Natural killer cell (primary cell): ENCODE measurements at regions of chr6 and their contacts with region 1.

Region 1: GRCh38 chr6:31079656-31080261 is 32.6 kb downstream of the C6orf15 start:
- DNase-seq: peak; percentile 39 to 83
- ATAC-seq: peak; percentile 83 to 88 (median 86)
- H3K4me3 ChIP-seq: no peak overlapping the region
- H3K4me3 Mint-ChIP-seq: peak overlapping the region; percentile 37
- H3K27ac ChIP-seq: no peak overlapping the region
- H3K27ac Mint-ChIP-seq: no peak overlapping the region
- H3K4me1 ChIP-seq: peaks cover 8% of the 10 kb centered on the region
- H3K4me1 Mint-ChIP-seq: peaks cover 0 to 9% of the 10 kb centered on the region in 2 donors
- H3K27me3 ChIP-seq: no peaks in the 10 kb centered on the region
- H3K27me3 Mint-ChIP-seq: peaks cover 3 to 8% of the 10 kb centered on the region in 2 donors
- CTCF ChIP-seq: peak; percentile 82

Region 2: GRCh38 chr6:30828027-30828960 is 251.5 kb before region 1 on chr6:
- intact Hi-C with region 1: loop called (anchors 2 kb)
- DNase-seq: peak; percentile 62 to 87
- ATAC-seq: peak; percentile 80 to 89 (median 84)
- H3K4me3 ChIP-seq: peak overlapping the region; percentile 42
- H3K4me3 Mint-ChIP-seq: peak overlapping the region; percentile 91
- H3K27ac ChIP-seq: peak overlapping the region; percentile 9
- H3K27ac Mint-ChIP-seq: peak overlapping the region in 1 of 2 donors; percentile 79
- H3K4me1 ChIP-seq: peaks cover 43% of the 10 kb centered on the region
- H3K4me1 Mint-ChIP-seq: peaks cover 6 to 50% of the 10 kb centered on the region in 2 donors
- H3K27me3 ChIP-seq: no peaks in the 10 kb centered on the region
- H3K27me3 Mint-ChIP-seq: peaks cover 0 to 20% of the 10 kb centered on the region in 2 donors
- CTCF ChIP-seq: peak; percentile 90

Region 3: DNA sequence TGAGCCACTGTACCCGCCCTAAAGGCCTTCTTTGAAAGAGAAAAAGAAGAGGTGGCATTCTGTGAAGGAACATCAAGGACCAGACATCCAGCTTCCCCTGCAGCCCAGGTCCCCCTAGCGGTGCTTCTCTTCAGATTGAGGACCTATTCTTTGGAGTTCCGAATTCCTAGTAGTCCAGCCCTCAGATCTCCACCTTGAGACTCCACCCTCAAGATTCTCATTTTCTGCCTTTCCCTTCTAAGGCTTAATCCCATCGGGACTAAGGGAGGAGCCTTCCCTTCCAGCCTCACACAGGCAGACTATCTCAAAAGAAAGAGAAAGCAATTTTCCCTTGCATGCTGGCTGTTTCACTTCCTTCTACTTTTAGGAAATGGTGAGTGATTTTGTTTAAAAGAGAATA is 37.0 kb before region 1 on chr6:
- intact Hi-C with region 1: no loop called
- DNase-seq: peak in 1 of 2 donors; percentile 58
- ATAC-seq: no peak
- H3K4me3 ChIP-seq: no peak overlapping the region
- H3K4me3 Mint-ChIP-seq: no peak overlapping the region
- H3K27ac ChIP-seq: no peak overlapping the region
- H3K27ac Mint-ChIP-seq: no peak overlapping the region
- H3K4me1 ChIP-seq: no peaks in the 10 kb centered on the region
- H3K4me1 Mint-ChIP-seq: peaks cover 0 to 7% of the 10 kb centered on the region in 2 donors
- H3K27me3 ChIP-seq: no peaks in the 10 kb centered on the region
- H3K27me3 Mint-ChIP-seq: peaks cover 30 to 38% of the 10 kb centered on the region in 2 donors
- CTCF ChIP-seq: peak; percentile 14